ENCODE measurements at regions of chr10 and their contacts with region 1.

Region 1: DNA sequence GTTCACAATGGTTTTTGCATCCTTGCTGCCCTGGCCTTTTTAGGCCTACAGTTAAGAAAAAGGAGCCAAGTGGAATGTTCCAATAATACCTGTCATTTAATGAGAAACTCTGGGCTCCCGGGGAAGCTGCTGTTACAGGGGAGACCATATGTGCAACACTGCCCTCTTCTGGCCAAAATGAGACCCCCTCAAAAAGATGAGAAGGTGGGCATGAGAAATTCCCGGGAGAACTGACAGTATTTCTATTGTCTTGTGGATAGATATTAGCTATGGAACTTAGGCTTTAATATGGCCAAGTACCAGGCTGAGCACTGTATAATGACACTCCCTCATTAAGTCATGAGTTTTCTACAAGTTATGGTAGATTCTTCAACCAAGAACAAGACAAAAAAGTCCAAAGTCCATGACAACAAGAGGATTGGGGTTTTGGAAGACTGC is 99.4 kb downstream of the CCDC3 start:
- DNase-seq: peak; percentile 58
- ATAC-seq: peak; percentile 33
- H3K4me3 Mint-ChIP-seq: no peak overlapping the region
- H3K27ac Mint-ChIP-seq: no peak overlapping the region
- H3K4me1 Mint-ChIP-seq: no peaks in the 10 kb centered on the region
- H3K27me3 Mint-ChIP-seq: no peaks in the 10 kb centered on the region

Region 2: DNA sequence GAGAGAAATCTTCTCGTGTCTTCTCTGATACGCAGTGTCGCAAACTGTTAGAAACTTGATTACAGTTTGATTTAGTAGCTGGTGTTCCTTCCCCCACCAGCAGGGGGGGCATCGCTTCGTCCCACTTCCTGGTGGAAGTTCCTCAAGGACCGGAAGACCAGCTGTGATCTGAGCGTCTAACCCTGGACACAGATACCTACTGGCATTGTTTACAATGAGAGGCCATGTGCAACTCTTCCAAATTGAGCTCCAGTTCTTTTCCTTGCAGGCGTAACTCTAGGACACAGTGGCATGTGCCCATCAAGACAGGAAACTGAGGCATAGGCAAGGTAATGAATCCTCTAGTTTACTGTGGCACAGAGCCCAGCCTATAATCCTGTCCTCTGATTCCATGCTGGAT is 119.6 kb before region 1 on chr10:
- CTCF ChIA-PET with region 1: interaction called, 15 read pairs
- DNase-seq: peak; percentile 44
- ATAC-seq: no peak
- H3K4me3 Mint-ChIP-seq: no peak overlapping the region
- H3K27ac Mint-ChIP-seq: no peak overlapping the region
- H3K4me1 Mint-ChIP-seq: peaks cover 9% of the 10 kb centered on the region
- H3K27me3 Mint-ChIP-seq: no peaks in the 10 kb centered on the region